CD4-positive, alpha-beta T cell (primary cell): ENCODE measurements at regions of chr13 and their contacts with region 1.

Region 1: GRCh38 chr13:94435604-94436226 is 43.8 kb downstream of the DCT start:
- DNase-seq: peak in 3 of 14 experiments; percentile 60 to 67 (median 64)
- ATAC-seq: peak; percentile 80
- H3K4me3 ChIP-seq: no peak overlapping the region
- H3K4me3 Mint-ChIP-seq: no peak overlapping the region
- H3K27ac ChIP-seq: no peak overlapping the region
- H3K27ac Mint-ChIP-seq: no peak overlapping the region
- H3K4me1 ChIP-seq: no peaks in the 10 kb centered on the region
- H3K4me1 Mint-ChIP-seq: no peaks in the 10 kb centered on the region
- H3K27me3 ChIP-seq: no peaks in the 10 kb centered on the region
- H3K27me3 Mint-ChIP-seq: no peaks in the 10 kb centered on the region
- CTCF ChIP-seq: peak; percentile 81

Region 2: DNA sequence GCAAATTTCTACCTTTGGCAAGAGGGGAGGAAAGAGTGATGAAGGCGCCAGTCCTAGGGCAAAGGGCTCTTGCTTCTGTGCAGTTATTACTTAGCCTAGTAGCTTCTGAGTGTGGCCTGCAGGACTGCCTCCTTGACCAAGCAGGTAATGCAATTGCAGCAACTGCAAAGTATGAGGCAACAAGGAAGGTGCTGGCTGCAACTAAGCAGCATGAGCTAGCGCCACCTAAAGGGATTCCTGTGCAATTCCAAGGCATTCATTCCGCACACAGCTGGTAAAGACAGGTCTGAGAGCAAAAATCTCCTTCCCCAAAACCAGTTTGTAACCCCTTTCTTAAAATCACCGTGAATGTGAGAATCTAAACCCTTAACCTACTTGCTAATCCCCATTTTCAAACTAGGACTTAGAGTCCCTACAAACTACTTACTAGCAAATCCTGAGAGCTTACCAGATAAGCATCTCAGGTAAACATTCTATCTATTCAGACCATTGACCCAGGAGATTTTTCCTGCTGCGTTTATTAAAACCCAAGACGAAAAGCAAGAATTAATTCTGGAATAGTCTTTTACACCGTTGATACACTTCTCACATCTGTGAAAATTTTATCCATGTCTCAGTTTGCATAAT is 19.1 kb before region 1 on chr13:
- CTCF ChIA-PET with region 1: no interaction called
- POLR2A ChIA-PET with region 1: no interaction called
- intact Hi-C with region 1: no loop called
- DNase-seq: no peak
- ATAC-seq: no peak
- H3K4me3 ChIP-seq: no peak overlapping the region
- H3K4me3 Mint-ChIP-seq: no peak overlapping the region
- H3K27ac ChIP-seq: no peak overlapping the region
- H3K27ac Mint-ChIP-seq: no peak overlapping the region
- H3K4me1 ChIP-seq: peaks cover 2% of the 10 kb centered on the region
- H3K4me1 Mint-ChIP-seq: peaks cover 24% of the 10 kb centered on the region
- H3K27me3 ChIP-seq: peaks cover 0 to 2% of the 10 kb centered on the region in 2 experiments
- H3K27me3 Mint-ChIP-seq: peaks cover 25% of the 10 kb centered on the region
- CTCF ChIP-seq: no peak

Region 3: DNA sequence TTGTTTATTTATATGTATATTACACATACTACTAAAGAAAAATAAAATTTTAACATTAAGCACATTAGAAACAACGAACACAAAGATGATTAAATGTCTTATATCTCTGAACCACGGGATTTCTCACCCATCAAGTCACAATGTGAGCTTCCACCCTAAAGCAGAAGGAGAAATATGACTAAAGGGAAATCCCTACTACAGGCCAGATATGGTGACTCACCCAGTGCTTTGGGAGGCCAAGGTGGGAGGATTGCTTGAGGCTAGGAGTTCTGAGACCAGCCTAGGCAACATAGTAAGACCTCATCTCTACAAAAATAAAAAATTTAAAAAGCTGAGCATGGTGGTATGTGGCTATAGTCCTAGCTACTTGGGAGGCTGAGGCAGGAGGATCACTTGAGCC is 19.2 kb after region 1 on chr13:
- CTCF ChIA-PET with region 1: no interaction called
- POLR2A ChIA-PET with region 1: no interaction called
- intact Hi-C with region 1: no loop called
- DNase-seq: no peak
- ATAC-seq: no peak
- H3K4me3 ChIP-seq: no peak overlapping the region
- H3K4me3 Mint-ChIP-seq: no peak overlapping the region
- H3K27ac ChIP-seq: no peak overlapping the region
- H3K27ac Mint-ChIP-seq: no peak overlapping the region
- H3K4me1 ChIP-seq: no peaks in the 10 kb centered on the region
- H3K4me1 Mint-ChIP-seq: no peaks in the 10 kb centered on the region
- H3K27me3 ChIP-seq: no peaks in the 10 kb centered on the region
- H3K27me3 Mint-ChIP-seq: no peaks in the 10 kb centered on the region
- CTCF ChIP-seq: no peak

Region 4: DNA sequence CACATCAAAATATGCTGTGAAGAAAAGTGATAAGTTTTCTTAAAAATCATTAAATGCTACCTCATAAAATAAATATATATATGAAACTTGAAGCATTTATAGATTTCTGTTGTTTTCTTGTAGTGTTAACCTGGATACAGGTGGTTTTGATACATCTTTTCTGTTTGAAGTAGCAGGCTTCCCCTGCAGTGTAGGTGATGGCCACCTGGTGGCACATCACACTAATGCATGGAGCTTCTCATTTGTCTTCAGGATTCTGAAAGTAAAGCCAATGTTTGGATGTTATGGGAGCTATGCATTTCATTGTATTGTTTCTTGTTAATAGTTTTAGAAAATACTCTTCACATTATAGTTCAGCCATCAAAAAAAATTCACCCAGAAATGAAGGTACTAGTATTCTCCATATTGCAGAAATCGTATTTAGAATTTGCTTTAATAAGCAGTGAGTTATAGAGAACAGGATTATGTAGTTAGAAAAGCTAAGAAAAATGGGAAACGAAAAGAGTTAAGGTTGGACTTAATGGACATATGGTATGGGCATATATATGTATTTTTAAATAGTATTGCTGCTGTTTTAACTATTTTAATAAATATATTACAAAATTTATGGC is 184.7 kb after region 1 on chr13:
- CTCF ChIA-PET with region 1: interaction called, 82 read pairs
- POLR2A ChIA-PET with region 1: interaction called, 9 read pairs
- intact Hi-C with region 1: loop called (anchors 1 kb)
- DNase-seq: peak in 8 of 14 experiments; percentile 2 to 53 (median 14)
- ATAC-seq: peak; percentile 79
- H3K4me3 ChIP-seq: no peak overlapping the region
- H3K4me3 Mint-ChIP-seq: no peak overlapping the region
- H3K27ac ChIP-seq: no peak overlapping the region
- H3K27ac Mint-ChIP-seq: no peak overlapping the region
- H3K4me1 ChIP-seq: no peaks in the 10 kb centered on the region
- H3K4me1 Mint-ChIP-seq: peaks cover 17% of the 10 kb centered on the region
- H3K27me3 ChIP-seq: no peaks in the 10 kb centered on the region
- H3K27me3 Mint-ChIP-seq: no peaks in the 10 kb centered on the region
- CTCF ChIP-seq: peak; percentile 59